ENCODE measurements at regions of chr19 and their contacts with region 1.

Region 1: DNA sequence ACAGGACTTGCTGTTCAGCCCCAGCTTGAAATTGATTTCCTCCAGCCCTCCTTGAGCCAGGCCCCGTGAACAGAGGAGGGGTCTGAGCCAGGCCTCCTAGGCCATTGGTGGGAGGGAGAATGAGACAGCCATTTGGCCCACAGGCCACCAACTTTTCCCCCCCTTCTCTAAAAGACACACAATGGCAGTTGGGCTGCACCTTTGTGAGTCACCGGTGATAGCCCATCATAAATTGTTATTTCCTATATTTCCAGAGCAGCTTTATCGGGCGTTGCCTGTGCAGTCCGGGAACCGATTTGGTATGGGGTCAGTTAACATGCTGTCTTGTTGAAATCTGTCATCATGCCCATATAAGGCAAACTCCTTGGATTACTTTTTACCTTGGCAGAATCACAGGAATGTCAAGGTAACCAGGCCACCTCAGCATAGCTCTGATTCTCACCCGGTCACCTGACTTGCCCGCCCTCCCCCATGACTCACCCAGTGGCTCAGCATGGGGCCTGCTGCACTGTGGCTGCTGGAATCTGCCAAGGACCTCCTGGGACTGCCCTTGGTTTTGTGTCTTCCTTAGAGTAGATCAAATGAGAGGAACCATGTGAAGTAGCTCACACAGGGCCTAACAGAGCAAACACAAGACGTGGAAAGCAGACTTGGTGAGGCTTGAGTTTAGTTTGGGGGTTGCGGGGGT is 36.1 kb downstream of the ACTN4 start:
- DNase-seq: peak; percentile 96
- ATAC-seq: peak; percentile 64
- H3K4me3 ChIP-seq: peak overlapping the region; percentile 42; the same call in 1 of the 2 replicates
- H3K27ac ChIP-seq: peak overlapping the region; percentile 100
- H3K4me1 ChIP-seq: peaks cover 68% of the 10 kb centered on the region
- H3K27me3 ChIP-seq: no peaks in the 10 kb centered on the region
- CTCF ChIP-seq: no peak

Region 2: GRCh38 chr19:38647368-38647965 is 36.1 kb before region 1 on chr19 and contains the start of gene ACTN4:
- CTCF ChIA-PET with region 1: no interaction called
- POLR2A ChIA-PET with region 1: interaction called, 13 read pairs
- intact Hi-C with region 1: loop called (anchors 5 kb)
- DNase-seq: peak; percentile 95
- ATAC-seq: peak; percentile 40
- H3K4me3 ChIP-seq: peak within 1 kb of the TSS; percentile 99
- H3K27ac ChIP-seq: peak within 1 kb of the TSS; percentile 81
- H3K4me1 ChIP-seq: peaks cover 20% of the 10 kb centered on the region
- H3K27me3 ChIP-seq: no peaks in the 10 kb centered on the region
- CTCF ChIP-seq: no peak
- total RNA-seq, gene ACTN4: 382 and 397 TPM in 2 replicates

Region 3: GRCh38 chr19:38658462-38659306 is 24.9 kb before region 1 on chr19:
- CTCF ChIA-PET with region 1: no interaction called
- POLR2A ChIA-PET with region 1: interaction called, 12 read pairs
- intact Hi-C with region 1: no loop called
- DNase-seq: peak; percentile 97
- ATAC-seq: peak; percentile 60
- H3K4me3 ChIP-seq: peak overlapping the region; percentile 53
- H3K27ac ChIP-seq: peak overlapping the region; percentile 99
- H3K4me1 ChIP-seq: peaks cover 93% of the 10 kb centered on the region
- H3K27me3 ChIP-seq: no peaks in the 10 kb centered on the region
- CTCF ChIP-seq: no peak

Region 4: DNA sequence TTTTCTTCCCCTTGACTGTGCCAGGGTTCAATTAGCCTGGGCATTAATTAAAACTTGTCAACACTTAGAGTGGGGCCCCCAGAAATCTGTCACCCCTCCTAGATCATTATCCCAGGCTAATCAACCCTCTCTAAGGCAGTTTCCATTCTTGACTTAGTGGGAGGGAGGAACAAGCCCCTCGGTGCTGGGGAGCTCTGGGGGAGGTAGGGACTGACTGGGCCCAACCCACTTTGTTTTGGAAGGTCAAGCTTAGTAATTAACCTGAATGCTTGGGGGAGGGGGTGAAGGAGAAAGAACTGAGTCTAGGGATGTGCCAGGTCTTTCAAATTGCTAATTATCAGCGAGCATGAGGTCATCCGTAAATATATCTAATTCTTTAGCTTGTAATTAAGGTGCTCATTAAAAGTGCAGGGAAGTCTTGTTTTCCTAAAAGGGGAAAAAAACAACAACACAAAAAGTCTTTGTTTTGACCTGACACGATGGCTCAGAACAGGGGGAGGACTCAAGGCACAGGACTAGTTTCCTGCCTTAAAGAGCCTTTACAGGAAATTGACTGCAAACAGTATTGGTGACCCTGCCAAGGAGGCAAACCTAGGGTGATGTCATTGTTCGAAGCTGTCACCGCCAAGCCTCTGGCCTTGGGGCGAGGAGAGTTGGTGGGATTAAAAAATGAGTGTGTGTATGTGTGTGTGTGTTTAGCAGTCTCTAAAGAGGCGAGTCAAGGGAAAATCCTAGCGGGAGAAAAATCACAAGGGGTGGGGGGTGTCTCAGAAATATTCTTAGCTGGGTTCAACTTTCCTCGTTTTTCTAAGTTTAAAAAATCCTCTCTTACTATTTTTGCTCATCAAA is 16.6 kb before region 1 on chr19:
- CTCF ChIA-PET with region 1: no interaction called
- POLR2A ChIA-PET with region 1: no interaction called
- intact Hi-C with region 1: loop called (anchors 1 kb)
- DNase-seq: peak; percentile 65
- ATAC-seq: peak; percentile 13; the same call in 1 of the 2 replicates
- H3K4me3 ChIP-seq: peak overlapping the region; percentile 24; the same call in 1 of the 2 replicates
- H3K27ac ChIP-seq: peak overlapping the region; percentile 76
- H3K4me1 ChIP-seq: peaks cover 73% of the 10 kb centered on the region
- H3K27me3 ChIP-seq: no peaks in the 10 kb centered on the region
- CTCF ChIP-seq: no peak